ENCODE measurements at regions of chr19 and their contacts with region 1.

Region 1: DNA sequence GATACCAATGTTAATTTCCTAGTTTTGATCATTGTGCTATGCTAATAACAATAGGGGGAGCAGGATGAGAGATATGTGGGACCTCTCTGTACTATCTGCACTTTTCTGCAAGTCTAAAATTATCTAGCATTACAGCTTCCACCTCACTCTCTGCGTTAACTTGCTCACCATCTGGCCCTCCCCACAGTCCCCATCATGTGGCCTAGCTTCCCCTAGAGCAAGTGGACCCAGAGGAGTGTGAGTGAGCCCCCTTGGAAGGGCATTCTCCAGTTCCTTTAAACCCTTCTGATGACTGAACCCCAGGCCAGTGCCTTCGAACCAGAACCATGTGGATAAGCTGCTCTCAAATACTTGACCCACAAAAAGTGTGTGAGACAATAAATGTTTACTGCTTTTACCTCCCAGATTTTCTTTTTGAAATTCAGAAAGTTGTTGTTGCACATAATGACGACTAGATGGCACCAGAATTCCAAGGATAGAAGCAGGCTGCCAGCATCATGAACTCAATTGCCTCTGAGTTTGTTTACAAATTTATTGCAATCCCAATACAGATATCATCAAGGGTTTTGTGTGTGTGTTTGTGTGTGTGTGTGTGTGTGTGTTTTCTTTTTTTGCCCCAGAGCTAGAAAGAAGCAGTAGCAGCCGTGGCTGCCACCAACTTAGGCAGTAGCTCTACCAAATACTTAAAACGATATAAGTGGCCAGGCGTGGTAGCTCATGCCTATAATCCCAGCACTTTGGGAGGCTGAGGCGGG is 49.0 kb upstream of the ZNF780A start:
- DNase-seq: no peak
- ATAC-seq: no peak

Region 2: GRCh38 chr19:40221858-40222837 is 82.4 kb after region 1 on chr19:
- intact Hi-C with region 1: loop called (anchors 2 kb)
- DNase-seq: no peak
- ATAC-seq: peak; percentile 83